ENCODE measurements at regions of chr11 and their contacts with region 1.

Region 1: GRCh38 chr11:3217676-3218482 is 734 bp downstream of the MRGPRG start:
- DNase-seq: peak in 1 of 2 experiments; percentile 49
- H3K4me3 ChIP-seq: no peak overlapping the region
- H3K27ac ChIP-seq: no peak overlapping the region
- H3K4me1 ChIP-seq: peaks cover 0 to 12% (median 4%) of the 10 kb centered on the region in 4 experiments; a peak in 3 of 7 replicates
- H3K27me3 ChIP-seq: no peaks in the 10 kb centered on the region
- CTCF ChIP-seq: no peak
- EP300 ChIP-seq: no peak
- POLR2A ChIP-seq: no peak
- RAD21 ChIP-seq: no peak

Region 2: DNA sequence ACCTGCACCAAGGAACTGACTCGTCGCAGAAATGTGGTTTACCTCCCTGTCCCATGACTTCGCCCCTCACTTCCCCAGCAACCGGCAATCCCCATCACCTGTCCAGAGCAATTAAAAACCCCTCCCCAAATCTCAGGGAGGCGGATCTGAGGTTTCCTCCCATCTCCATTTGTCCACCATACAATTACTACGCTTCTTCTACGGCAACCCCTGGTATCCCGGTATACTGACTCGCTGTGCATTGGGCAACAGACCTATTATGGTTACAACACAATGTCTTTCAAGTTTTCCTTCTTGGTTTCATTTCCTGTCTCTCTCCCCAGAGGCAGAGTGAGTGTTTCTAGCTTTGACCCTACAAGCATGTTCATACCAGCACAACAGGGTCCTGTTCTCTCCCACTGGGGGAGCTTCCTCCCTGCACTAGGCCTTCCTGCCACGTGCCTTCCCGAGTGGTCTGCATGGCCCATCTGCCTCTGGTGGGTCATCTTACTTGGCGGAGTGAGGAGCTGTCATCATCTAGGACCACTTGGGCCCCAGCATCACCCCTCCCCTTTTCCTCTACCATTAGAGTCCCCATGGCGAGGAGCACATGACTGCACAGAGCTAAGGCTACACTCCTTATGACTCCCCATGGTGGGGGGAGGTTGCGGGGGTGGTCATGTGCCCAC is 195.4 kb before region 1 on chr11:
- CTCF ChIA-PET with region 1: no interaction called
- POLR2A ChIA-PET with region 1: no interaction called
- DNase-seq: no peak
- H3K4me3 ChIP-seq: no peak overlapping the region
- H3K27ac ChIP-seq: no peak overlapping the region
- H3K4me1 ChIP-seq: no peaks in the 10 kb centered on the region
- H3K27me3 ChIP-seq: no peaks in the 10 kb centered on the region
- CTCF ChIP-seq: no peak
- EP300 ChIP-seq: no peak
- POLR2A ChIP-seq: no peak
- RAD21 ChIP-seq: no peak

Region 3: GRCh38 chr11:3037040-3037944 is 180.6 kb before region 1 on chr11:
- CTCF ChIA-PET with region 1: interaction called, 32 read pairs
- POLR2A ChIA-PET with region 1: no interaction called
- DNase-seq: peak; percentile 43 to 90
- H3K4me3 ChIP-seq: no peak overlapping the region
- H3K27ac ChIP-seq: no peak overlapping the region
- H3K4me1 ChIP-seq: no peaks in the 10 kb centered on the region
- H3K27me3 ChIP-seq: no peaks in the 10 kb centered on the region
- CTCF ChIP-seq: peak; percentile 64 to 92 (median 85)
- EP300 ChIP-seq: no peak
- POLR2A ChIP-seq: no peak
- RAD21 ChIP-seq: peak; percentile 87 to 89

Region 4: DNA sequence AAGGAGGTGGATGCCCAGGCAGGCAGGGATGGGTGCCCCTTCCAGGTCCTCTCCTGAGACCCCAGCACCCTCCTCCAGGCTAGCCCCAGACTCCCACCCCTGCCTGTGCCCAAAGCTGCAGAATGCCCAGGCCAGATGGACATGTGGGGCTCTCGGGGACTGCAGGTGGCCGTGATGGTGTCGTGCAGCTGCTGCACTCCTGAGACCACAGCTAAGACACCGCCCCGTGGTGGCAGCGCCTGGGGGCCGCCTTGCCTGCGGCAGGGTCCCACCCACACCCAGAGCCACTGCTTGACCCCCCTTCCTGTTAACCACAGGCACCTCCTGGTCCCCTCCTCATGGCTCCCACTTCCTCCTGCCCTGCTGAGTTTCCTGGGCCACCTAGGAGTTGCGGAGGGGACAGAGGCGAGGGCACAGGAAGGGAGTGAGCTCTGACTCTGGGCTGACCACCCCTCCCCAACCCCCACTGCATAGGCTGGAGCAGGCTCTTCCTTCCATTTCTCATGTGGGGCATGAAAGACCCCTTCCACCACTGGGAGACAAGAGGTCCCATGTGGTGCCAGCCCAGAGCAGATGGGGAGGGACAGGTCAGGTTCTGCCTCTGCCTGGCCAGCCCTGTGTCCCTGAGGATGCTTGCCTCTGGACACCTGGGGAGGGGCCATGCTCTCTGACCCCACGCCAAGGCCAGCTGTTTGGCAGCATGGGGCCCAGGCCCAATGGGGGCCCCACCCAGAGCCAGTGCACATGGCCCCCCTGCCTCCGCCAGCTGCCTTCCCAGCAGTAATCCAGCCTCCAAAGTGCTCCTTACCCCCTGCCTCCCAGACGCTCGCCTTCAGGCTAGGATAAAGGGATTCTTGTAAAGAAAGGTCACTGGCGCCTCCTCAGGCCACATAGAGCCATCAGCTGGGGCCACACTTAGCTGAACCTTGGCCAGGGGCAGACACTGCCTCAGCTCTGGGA is 82.1 kb before region 1 on chr11:
- CTCF ChIA-PET with region 1: interaction called, 25 read pairs
- POLR2A ChIA-PET with region 1: no interaction called
- DNase-seq: no peak
- H3K4me3 ChIP-seq: no peak overlapping the region
- H3K27ac ChIP-seq: no peak overlapping the region
- H3K4me1 ChIP-seq: peaks cover 0 to 9% (median 5%) of the 10 kb centered on the region in 4 experiments; a peak in 4 of 7 replicates
- H3K27me3 ChIP-seq: no peaks in the 10 kb centered on the region
- CTCF ChIP-seq: peak in 2 of 3 experiments; percentile 63 to 70; a peak in 3 of 4 replicates
- EP300 ChIP-seq: no peak
- POLR2A ChIP-seq: no peak
- RAD21 ChIP-seq: peak; percentile 46 to 68

Region 5: DNA sequence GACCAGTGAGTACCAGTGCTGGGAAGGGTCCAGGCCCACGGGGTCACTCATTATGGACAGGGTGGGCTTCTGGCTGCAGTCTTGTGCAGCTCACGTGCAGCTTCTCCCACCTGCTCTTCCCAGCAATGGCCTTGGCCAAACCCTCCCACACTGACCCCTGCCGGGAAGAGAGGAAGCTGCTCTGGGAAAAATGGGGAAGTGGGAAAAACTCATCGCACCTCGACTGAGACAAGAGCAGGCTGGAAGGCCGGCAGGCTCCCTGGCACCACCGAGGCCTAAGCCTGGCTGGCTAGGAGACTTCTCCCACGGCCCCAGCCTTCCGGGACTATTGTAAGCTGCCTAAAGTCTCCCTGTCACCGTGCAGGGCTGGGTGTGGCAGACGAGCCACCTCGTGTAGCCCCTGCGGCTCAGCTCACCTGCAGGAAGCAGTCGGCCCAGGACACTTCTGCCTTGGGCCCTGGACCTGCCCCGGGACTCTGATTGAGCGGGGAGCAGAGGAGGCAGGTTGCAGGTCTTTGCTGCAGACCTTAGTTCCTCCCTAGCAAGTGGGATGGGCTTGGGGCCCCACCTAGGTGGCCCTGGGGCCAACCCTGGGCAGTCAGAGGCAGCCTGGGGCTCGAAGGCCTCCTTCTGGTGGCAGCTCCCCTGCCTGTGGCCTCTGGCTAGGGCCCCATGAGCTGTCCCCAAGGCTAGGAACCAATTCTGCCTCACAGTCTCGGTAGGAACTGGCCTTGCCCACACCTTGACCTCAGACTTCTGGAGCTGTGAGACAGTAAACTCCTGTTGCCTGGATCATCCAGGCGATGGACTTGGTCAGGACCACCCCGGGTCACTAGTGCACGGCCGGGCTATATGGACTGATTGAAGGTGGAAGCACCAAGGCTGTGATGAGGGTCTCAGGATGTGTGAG is 22.4 kb before region 1 on chr11:
- CTCF ChIA-PET with region 1: interaction called, 99 read pairs
- POLR2A ChIA-PET with region 1: interaction called, 3 read pairs
- DNase-seq: peak in 1 of 2 experiments; percentile 47
- H3K4me3 ChIP-seq: no peak overlapping the region
- H3K27ac ChIP-seq: no peak overlapping the region
- H3K4me1 ChIP-seq: peaks cover 0 to 9% (median 3%) of the 10 kb centered on the region in 4 experiments; a peak in 4 of 7 replicates
- H3K27me3 ChIP-seq: no peaks in the 10 kb centered on the region; a peak in 1 of 7 replicates
- CTCF ChIP-seq: peak in 2 of 3 experiments; percentile 24 to 27; a peak in 1 of 4 replicates
- EP300 ChIP-seq: no peak
- POLR2A ChIP-seq: no peak
- RAD21 ChIP-seq: peak; percentile 15 to 47; a peak in 2 of 4 replicates

Region 6: DNA sequence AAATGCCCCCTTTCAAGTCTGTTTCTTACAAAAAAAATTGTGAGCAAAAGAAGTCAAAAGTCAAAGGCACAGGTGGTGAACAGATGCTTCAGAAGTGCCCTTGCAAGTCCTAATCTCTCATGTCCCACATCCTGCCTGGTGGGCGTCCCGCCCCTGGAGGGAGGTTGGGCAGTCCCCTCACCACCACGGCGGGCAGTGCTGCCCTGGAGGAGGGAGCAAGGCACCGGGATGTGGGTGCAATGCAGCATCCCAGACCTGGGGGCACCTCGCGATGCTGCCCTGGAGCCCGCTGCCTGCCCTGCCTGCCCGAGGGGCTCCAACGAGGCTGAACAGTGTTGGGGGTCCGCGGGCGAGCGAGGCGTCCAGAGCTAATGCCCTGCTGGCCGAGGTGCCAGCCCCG is 15.1 kb before region 1 on chr11:
- CTCF ChIA-PET with region 1: interaction called, 99 read pairs
- POLR2A ChIA-PET with region 1: interaction called, 3 read pairs
- DNase-seq: no peak
- H3K4me3 ChIP-seq: peak overlapping the region; percentile 30 to 60 (median 51); a peak in 7 of 8 replicates
- H3K27ac ChIP-seq: no peak overlapping the region
- H3K4me1 ChIP-seq: peaks cover 0 to 4% (median under 1%) of the 10 kb centered on the region in 4 experiments; a peak in 6 of 7 replicates
- H3K27me3 ChIP-seq: peaks cover 10 to 42% (median 31%) of the 10 kb centered on the region in 4 experiments
- CTCF ChIP-seq: no peak
- EP300 ChIP-seq: no peak
- POLR2A ChIP-seq: no peak
- RAD21 ChIP-seq: no peak